ENCODE measurements at regions of chr22 and their contacts with region 1.

Region 1: DNA sequence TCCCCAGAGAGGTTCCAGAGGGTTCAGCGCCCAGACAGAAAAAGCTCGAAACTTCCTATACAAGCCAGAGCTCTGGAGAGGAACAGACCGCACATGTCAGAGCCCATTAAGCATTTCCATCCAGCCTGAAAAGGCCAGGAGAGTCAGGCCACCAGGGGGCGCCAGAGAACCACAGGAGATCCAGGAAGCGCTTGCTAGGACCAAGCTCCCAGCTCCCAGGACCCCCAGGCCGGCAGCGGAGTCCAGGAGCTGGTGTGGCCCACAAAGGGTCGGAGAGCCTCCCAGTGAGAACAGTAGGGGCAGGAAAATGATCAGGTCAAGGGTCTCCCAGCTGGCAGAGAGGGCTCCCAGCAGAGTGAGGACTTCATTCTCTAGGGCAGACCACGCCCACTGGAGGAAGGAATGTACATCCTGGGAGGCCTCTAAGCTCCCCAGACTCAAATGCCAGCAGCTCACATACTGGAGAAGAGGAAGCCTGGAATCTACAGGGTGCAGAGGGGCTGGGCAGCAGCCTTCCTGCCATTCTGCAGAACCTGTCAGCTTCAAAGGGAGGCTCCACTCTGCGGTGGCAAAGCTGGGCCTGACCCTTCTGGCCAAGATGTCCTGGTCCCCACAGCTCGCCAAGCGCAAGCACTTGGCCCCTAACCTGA is 2.1 kb upstream of the MEI1 start:
- DNase-seq: peak; percentile 97
- H3K4me3 Mint-ChIP-seq: peak overlapping the region; percentile 30
- H3K27ac Mint-ChIP-seq: peak overlapping the region; percentile 77
- H3K4me1 Mint-ChIP-seq: peaks cover 9% of the 10 kb centered on the region
- H3K27me3 Mint-ChIP-seq: no peaks in the 10 kb centered on the region

Region 2: DNA sequence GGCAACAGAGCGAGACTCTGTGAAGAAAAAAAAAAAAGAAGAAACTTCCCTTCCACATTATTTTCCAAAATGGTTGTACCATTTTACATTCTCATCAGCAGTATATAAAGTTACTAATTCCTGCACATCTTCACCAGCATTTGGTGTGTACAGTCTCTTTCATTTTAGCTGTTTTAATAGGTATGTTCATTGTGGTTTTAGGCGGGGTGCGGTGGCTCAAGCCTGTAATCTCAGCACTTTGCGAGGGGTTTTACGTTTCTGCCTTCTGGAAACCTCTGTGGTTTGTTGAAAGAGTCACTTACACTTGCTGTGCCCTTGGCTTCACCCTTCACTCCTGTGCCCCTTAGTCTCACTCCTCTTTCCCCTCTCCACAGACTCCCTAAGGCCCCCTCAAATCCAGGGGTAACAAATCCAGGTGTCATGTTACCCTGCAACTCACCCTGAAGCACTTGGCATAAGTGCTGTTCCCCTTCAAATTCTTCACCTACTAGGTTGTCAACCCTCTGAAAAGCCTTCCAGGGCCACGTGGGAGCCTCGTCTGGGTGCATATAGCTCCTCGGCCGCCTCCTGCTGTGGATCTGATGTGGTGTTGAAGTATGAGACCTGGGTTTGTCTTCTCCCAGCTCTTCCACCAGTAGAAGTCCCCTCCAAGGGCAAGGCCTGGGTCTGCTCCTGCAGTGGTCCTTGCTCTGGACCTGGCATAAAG is 271.4 kb before region 1 on chr22:
- CTCF ChIA-PET with region 1: no interaction called
- intact Hi-C with region 1: no loop called
- DNase-seq: peak; percentile 68
- H3K4me3 Mint-ChIP-seq: no peak overlapping the region
- H3K27ac Mint-ChIP-seq: peak overlapping the region; percentile 66
- H3K4me1 Mint-ChIP-seq: peaks cover 13% of the 10 kb centered on the region
- H3K27me3 Mint-ChIP-seq: no peaks in the 10 kb centered on the region

Region 3: DNA sequence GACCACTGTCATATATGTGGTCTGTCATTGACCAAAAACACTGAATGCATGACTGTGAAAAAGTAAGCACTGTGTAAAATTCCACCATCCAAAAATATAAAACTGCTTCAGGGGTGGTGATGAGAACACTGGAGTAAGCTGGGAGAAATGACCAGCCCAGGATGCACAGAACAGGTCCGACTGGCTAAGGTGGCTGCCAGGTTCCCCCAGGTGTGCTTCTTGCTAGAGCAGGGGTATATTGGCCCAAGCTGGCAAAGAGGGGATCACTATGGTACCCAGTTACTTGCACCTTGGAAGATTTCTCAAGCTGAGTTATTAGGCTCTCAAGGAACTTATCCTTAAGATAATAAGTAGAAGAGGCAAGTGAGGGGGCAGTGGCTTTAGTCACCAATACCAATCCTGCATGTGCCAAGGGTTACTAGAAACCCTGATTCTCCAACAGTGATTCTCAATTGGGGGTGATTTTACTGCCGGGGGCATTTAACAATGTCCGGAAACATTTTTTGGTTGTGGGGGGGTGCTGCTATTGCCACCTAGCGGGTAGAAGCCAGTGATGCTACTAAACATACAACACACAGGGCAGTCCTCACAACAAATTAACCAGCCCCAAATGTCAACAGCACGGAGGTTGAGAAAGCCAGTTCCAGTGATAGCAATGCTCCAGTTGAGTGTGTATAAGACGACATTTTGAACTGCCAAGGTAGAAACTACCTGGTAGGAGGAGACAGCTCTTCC is 24.3 kb before region 1 on chr22:
- CTCF ChIA-PET with region 1: interaction called, 12 read pairs
- intact Hi-C with region 1: no loop called
- DNase-seq: no peak
- H3K4me3 Mint-ChIP-seq: no peak overlapping the region
- H3K27ac Mint-ChIP-seq: no peak overlapping the region
- H3K4me1 Mint-ChIP-seq: peaks cover 9% of the 10 kb centered on the region
- H3K27me3 Mint-ChIP-seq: no peaks in the 10 kb centered on the region

Region 4: GRCh38 chr22:41746567-41747400 is 49.5 kb after region 1 on chr22:
- CTCF ChIA-PET with region 1: interaction called, 14 read pairs
- intact Hi-C with region 1: no loop called
- DNase-seq: peak; percentile 83
- H3K4me3 Mint-ChIP-seq: no peak overlapping the region
- H3K27ac Mint-ChIP-seq: no peak overlapping the region
- H3K4me1 Mint-ChIP-seq: peaks cover 6% of the 10 kb centered on the region
- H3K27me3 Mint-ChIP-seq: no peaks in the 10 kb centered on the region

Region 5: GRCh38 chr22:41800348-41801146 is 103.3 kb after region 1 on chr22 and contains the start of gene CCDC134:
- CTCF ChIA-PET with region 1: interaction called, 37 read pairs
- intact Hi-C with region 1: loop called (anchors 5 kb)
- DNase-seq: peak; percentile 93
- H3K4me3 Mint-ChIP-seq: peak within 1 kb of the TSS; percentile 84
- H3K27ac Mint-ChIP-seq: peak within 1 kb of the TSS; percentile 95
- H3K4me1 Mint-ChIP-seq: peaks cover 38% of the 10 kb centered on the region
- H3K27me3 Mint-ChIP-seq: no peaks in the 10 kb centered on the region
- total RNA-seq, gene CCDC134: 17.0 to 19.3 TPM

Region 6: DNA sequence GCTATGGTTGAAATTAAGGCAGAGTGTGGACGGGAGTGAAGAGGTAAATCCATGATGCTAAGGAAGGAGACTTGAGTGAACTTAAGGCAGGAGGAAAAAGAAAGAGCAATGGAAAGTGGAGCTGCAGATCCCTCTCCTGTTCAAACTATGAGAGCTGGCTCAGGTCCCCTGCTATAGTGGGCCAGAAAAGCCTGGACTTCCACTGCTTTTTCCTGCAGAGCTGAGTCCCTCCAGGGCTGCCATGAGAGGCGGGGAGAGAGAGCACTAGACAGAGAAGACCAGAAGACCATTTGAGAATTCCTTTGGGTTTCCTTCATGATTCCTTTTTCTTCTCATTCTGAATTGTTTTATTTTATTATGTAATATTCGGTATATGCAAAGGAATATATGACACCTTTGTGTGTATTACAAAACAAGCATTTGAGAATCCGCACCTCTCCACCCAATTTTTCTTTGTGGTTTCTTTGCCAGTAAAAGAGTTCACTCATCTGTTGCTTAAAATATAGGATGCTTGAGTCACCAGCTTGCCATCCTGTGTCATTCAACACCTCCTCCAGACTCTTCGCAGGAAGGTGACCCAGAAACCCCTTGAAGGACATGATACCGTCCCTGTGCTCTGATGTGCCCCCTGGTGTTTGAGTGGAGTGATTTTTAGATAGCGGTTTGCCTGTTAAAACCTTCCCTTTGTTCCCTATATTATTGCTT is 160.1 kb after region 1 on chr22:
- CTCF ChIA-PET with region 1: interaction called, 11 read pairs
- intact Hi-C with region 1: loop called (anchors 1 kb)
- DNase-seq: peak; percentile 93
- H3K4me3 Mint-ChIP-seq: peak overlapping the region; percentile 11
- H3K27ac Mint-ChIP-seq: peak overlapping the region; percentile 95
- H3K4me1 Mint-ChIP-seq: peaks cover 77% of the 10 kb centered on the region
- H3K27me3 Mint-ChIP-seq: no peaks in the 10 kb centered on the region

Region 7: DNA sequence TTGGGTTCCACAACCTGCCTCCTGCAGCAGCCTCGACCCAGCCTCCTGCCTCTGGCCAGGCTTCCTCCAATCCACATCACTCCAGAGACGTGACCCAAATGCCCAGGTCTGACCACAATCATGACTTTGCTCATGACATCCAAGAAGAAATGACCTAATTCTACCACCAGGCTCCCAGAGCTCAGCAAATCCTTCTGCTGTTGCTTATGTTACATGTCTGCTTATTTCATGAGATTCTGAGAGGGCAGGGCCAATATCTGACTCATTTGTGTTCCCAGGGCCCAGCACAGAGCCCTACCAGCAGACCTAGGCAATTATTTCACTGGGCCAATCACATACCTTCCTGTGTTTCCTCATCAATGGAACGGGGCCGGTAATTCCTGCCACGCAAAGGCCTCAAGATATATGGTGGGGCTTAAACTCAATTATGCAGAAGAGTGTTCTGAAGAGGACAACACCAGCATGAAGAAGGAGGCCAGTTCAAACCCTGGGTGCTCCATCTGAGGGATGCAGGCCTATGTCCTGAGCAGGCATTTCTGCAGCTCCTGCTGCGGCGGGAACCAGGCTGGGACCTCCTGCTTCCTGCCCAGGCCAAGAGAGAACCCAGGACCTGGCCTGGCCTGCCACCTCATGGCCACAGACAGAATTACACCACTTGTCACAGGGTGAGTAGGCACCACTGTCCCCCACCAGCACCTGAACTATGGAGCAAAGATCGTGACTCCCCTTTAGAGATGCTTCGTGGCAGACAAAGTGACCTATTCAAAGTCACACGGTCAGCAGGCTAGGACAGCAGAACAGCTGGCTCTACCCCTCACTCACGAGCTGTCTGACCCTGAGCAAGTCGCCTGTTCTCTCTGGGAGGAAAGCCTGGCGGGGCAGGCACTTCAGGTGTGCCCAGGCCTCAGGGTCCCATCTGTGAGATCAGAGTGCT is 243.8 kb after region 1 on chr22:
- CTCF ChIA-PET with region 1: interaction called, 19 read pairs
- intact Hi-C with region 1: loop called (anchors 1 kb)
- DNase-seq: peak; percentile 91
- H3K4me3 Mint-ChIP-seq: peak overlapping the region; percentile 69
- H3K27ac Mint-ChIP-seq: peak overlapping the region; percentile 100
- H3K4me1 Mint-ChIP-seq: peaks cover 69% of the 10 kb centered on the region
- H3K27me3 Mint-ChIP-seq: no peaks in the 10 kb centered on the region

Region 8: GRCh38 chr22:42444077-42444904 is 747.0 kb after region 1 on chr22:
- CTCF ChIA-PET with region 1: no interaction called
- intact Hi-C with region 1: loop called (anchors 5 kb)
- DNase-seq: peak; percentile 92
- H3K4me3 Mint-ChIP-seq: peak overlapping the region; percentile 71
- H3K27ac Mint-ChIP-seq: peak overlapping the region; percentile 87
- H3K4me1 Mint-ChIP-seq: peaks cover 32% of the 10 kb centered on the region
- H3K27me3 Mint-ChIP-seq: no peaks in the 10 kb centered on the region

Measured in activated naive CD4-positive, alpha-beta T cell treated with anti-CD3 and anti-CD28 coated beads for 36 hours (primary cell).